ENCODE measurements at regions of chr2 and their contacts with region 1.

Region 1: GRCh38 chr2:191691016-191691735 is 13.2 kb downstream of the NABP1 start:
- DNase-seq: peak in 1 of 3 donors; percentile 89
- ATAC-seq: peak; percentile 85
- H3K4me3 ChIP-seq: no peak overlapping the region
- H3K4me1 ChIP-seq: peaks cover 12% of the 10 kb centered on the region
- CTCF ChIP-seq: peak; percentile 56

Region 2: GRCh38 chr2:191436368-191437055 is 254.7 kb before region 1 on chr2:
- intact Hi-C with region 1: no loop called
- DNase-seq: no peak
- ATAC-seq: peak; percentile 76
- H3K4me3 ChIP-seq: no peak overlapping the region
- H3K4me1 ChIP-seq: no peaks in the 10 kb centered on the region
- CTCF ChIP-seq: no peak

Region 3: DNA sequence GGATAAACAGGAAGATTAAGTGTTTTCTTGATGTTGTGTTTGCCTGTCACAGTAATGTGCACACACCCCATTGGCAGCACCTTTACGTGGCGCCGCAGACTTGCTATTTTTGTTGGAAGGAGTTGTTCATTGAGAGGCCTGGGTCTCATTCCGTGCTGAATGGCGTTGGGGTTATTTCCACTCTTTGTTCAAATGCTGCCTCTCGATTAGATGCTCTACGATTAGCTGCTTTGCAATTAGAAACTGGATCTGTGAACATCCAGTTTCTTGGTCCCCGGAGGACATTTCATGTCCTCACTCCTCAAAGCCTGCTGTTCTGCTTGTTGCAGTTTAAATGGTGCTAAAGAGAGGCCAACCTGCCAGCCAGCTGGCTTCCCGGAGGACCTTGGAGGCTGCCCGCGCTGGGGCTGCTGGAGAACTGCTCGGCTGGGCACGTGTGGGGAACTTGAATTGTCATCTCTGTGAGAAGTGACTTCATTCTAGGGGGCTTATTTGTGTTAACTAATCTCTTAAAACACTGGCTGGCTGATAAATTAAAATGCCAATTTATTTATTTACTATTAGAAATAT is 130.7 kb before region 1 on chr2:
- intact Hi-C with region 1: loop called in 1 of 2 experiments (anchors 5 kb)
- DNase-seq: no peak
- ATAC-seq: no peak
- H3K4me3 ChIP-seq: no peak overlapping the region
- H3K4me1 ChIP-seq: no peaks in the 10 kb centered on the region
- CTCF ChIP-seq: no peak

Region 4: DNA sequence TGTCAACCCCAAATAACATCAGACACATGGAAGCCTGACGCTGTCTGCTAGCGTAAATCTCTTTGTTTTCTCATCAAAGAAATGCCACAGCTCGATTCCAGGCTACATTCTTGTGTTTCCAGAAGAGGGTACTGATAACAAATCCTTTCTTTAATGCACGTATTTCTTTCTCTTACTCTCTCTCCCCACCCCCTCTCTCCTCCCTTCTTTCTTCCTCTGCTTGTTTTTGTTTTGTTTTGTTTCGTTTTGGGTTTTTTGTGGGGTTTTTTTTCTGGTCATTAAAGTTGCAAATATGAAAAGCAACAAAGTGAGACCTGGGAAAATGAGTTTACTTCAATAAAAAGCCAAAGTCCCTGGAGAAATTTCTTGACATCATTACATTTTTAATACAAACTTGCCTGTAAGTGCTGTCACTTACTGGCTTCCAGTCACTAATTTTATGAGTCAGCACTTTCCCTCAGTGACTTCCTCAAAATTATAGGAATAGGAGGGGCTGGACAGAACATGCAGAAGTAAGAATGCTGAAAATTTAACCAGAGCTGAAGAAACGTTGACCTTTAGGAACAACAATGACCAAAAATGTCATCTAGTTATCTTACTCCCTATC is 119.9 kb before region 1 on chr2:
- intact Hi-C with region 1: loop called in 1 of 2 experiments (anchors 2 kb)
- DNase-seq: peak in 1 of 3 donors; percentile 17
- ATAC-seq: peak; percentile 35
- H3K4me3 ChIP-seq: no peak overlapping the region
- H3K4me1 ChIP-seq: no peaks in the 10 kb centered on the region
- CTCF ChIP-seq: no peak

Region 5: DNA sequence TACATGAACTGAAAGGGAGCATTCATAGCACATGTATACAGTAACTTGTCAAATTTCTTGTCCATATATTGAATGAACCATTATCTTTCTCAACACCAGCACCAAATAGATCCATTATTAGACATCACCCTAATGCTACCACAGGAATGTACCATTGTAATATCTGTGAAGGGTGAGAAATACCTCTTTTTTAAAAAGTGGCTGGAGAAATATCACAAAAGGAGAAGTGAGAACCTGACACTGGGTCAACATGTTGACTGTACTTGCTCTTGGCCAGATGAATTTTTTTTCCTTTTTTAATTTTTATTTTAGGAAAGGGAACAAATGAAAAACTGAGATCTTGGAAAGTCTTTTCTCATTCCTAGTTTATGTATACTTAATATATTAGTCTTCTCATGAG is 92.2 kb after region 1 on chr2:
- intact Hi-C with region 1: no loop called
- DNase-seq: no peak
- ATAC-seq: no peak
- H3K4me3 ChIP-seq: no peak overlapping the region
- H3K4me1 ChIP-seq: no peaks in the 10 kb centered on the region
- CTCF ChIP-seq: no peak

Measured in mucosa of descending colon (tissue), 3 donors.